Heart left ventricle (tissue), 16 donors: ENCODE measurements at regions of chr1 and their contacts with region 1.

Region 1: DNA sequence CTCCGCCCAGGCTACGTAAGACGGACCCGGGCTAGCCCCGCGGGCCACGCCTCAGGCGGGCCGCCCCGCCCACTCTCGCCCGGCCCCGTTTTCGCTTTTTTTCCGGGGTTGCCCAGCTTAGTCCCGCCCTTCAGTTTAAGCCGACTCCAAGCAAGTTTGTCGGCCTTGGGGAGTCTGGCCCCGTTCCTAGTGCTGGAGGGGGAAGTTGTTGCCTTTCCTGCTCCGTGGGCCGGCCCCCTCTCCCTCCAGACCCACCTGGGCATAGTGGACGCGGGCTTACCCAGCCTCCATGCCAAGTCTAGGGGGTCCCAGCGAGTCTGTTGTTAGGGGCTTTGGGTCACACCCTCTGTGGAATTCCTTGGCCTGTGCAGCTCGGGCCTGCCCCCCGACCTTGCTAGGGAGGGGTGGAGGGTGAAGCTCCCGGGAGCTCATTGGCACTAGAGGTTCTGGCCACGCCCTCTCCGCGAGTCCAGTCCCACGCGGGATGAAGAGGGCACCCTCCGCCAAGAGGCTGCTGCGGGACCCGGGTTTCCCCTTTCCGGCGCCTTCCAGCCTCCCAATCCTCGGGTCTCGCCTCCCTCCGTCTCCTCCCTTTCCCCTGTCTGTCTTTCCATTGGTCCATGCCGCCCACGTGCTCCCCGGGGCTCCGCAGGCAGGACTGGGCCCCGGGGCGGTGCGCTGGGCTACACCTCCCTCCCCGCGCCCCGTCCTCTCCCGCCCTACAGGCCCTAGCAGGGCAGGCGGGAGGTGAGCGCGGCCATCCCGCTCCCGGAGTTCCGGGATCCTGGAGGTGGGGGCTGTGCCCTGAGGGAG is 3.3 kb downstream of the RUSC1 start:
- DNase-seq: peak; percentile 97 to 98 (median 97)
- ATAC-seq: peak; percentile 85 to 91 (median 90)
- H3K4me3 ChIP-seq: peak overlapping the region; percentile 53 to 93 (median 80)
- H3K27ac ChIP-seq: peak overlapping the region; percentile 92 to 99 (median 95)
- H3K4me1 ChIP-seq: peaks cover 6 to 51% (median 31%) of the 10 kb centered on the region in 12 donors
- H3K27me3 ChIP-seq: no peaks in the 10 kb centered on the region
- CTCF ChIP-seq: no peak
- POLR2A ChIP-seq: peak in 1 of 2 donors; percentile 90

Region 2: DNA sequence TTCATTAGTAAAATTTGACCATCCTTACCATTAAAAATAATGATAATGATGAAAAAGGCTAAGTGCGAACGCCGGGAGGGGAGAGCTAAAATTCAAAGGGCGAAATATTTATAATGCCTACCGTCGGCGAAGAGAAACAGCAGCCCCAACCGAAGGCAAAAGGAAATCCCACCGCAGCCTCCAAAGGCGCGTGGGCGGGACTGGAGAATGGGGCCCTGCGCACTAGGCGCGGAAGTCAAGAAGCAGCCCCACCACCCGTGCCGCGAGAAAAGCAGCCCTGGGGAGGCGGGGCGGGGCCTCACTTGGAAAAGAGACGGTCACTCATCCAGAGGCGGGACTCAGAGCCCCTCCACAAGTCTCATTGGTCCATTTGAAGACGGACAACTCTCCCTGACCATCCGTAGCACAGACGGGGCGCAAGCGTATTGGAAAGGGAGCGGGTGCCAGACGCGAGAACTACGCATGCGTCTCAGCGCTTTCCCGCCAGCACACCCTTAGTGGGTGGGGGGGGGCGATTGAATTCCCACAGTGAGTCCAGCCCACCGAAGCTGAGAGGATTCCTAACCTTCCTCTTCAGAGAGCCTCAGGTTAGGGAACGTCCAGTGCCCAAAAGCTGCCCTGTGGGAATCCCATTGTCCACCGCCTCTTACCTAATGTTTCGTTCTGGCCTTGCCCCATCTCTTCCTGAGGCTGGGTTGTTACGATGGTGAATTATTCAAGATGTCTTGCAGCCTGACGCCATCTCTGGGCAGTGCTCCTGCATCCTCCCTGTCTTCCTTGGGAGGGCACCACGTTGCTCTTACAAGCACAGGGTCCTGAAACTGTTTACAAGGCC is 96.5 kb before region 1 on chr1:
- intact Hi-C with region 1: no loop called
- DNase-seq: peak; percentile 98 to 99 (median 99)
- ATAC-seq: peak; percentile 99
- H3K4me3 ChIP-seq: peak overlapping the region; percentile 22 to 77 (median 62)
- H3K27ac ChIP-seq: peak overlapping the region; percentile 42 to 96 (median 88)
- H3K4me1 ChIP-seq: peaks cover 0 to 54% (median 17%) of the 10 kb centered on the region in 12 donors
- H3K27me3 ChIP-seq: no peaks in the 10 kb centered on the region
- CTCF ChIP-seq: no peak
- POLR2A ChIP-seq: peak in 1 of 2 donors; percentile 81

Region 3: GRCh38 chr1:155244368-155245162 is 79.4 kb before region 1 on chr1:
- intact Hi-C with region 1: loop called in 1 of 10 experiments (anchors 1 kb)
- DNase-seq: peak; percentile 97 to 99 (median 98)
- ATAC-seq: peak; percentile 94 to 96 (median 94)
- H3K4me3 ChIP-seq: peak overlapping the region; percentile 46 to 77 (median 67)
- H3K27ac ChIP-seq: peak overlapping the region; percentile 75 to 97 (median 90)
- H3K4me1 ChIP-seq: peaks cover 0 to 41% (median 22%) of the 10 kb centered on the region in 12 donors
- H3K27me3 ChIP-seq: peaks cover 0 to 4% (median 0%) of the 10 kb centered on the region in 9 donors
- CTCF ChIP-seq: peak in 6 of 12 donors; percentile 24 to 56 (median 34)
- POLR2A ChIP-seq: peak in 1 of 2 donors; percentile 88

Region 4: DNA sequence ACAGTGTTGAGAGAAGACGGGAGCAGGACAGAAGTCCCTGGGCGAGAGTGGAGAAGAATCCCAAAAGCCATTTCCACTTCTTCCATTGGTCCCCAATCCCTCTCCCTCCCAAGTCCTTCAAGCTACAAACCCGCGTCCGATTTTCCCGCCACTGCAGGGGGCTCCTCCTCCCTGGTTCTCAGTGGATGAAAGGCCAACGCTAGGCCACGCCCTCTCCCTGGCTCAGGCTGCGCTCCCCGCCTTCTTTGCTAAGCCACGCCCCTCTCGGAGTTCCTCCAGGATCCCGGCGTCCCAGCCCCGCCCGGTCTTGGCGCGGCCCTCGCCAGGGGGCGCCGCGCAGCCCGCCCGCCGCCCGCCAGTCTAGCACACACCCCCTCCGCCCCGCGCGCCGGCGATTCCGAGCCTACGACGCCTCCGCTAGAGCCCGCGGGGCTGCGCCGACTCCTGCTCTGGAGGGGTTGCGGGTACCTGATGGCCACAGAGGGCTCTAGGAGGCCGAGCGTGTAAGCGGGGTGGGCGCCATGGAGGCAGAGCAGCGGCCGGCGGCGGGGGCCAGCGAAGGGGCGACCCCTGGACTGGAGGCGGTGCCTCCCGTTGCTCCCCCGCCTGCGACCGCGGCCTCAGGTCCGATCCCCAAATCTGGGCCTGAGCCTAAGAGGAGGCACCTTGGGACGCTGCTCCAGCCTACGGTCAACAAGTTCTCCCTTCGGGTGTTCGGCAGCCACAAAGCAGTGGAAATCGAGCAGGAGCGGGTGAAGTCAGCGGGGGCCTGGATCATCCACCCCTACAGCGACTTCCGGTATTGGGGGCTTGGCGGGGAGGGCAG is 46.7 kb before region 1 on chr1 and contains the start of gene HCN3:
- intact Hi-C with region 1: loop called (anchors 1 to 5 kb)
- DNase-seq: peak; percentile 98 to 99 (median 98)
- ATAC-seq: peak; percentile 89 to 94 (median 92)
- H3K4me3 ChIP-seq: peak within 1 kb of the TSS; percentile 33 to 82 (median 70)
- H3K27ac ChIP-seq: peak within 1 kb of the TSS; percentile 16 to 69 (median 52)
- H3K4me1 ChIP-seq: peaks cover 4 to 31% (median 21%) of the 10 kb centered on the region in 12 donors
- H3K27me3 ChIP-seq: no peaks in the 10 kb centered on the region
- CTCF ChIP-seq: peak; percentile 58 to 98 (median 86)
- POLR2A ChIP-seq: peak in 1 of 2 donors; percentile 25
- total RNA-seq, gene HCN3: 0.49 to 1.7 (median 0.99) TPM

Region 5: DNA sequence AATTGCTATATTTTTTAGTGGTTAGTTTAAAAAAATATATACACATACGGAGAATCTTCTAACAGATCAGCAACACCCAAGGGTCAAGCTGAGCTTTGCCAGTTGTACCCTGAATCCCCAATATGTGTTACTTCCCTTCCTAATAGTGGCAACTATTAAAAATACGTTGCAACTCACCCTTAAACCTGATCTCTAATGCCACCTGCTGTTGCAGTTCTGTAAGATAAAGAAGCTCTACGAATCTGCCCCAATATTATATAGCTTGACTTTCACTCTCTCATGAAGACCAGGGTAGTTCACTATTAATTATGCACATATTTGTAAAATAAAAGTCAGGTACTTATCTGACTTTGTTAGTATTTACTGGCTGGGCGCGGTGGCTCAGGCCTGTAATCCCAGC is 180.2 kb after region 1 on chr1:
- intact Hi-C with region 1: loop called in 1 of 10 experiments (anchors 2 kb)
- DNase-seq: no peak
- ATAC-seq: peak in 2 of 4 donors; percentile 42 to 45
- H3K4me3 ChIP-seq: no peak overlapping the region
- H3K27ac ChIP-seq: no peak overlapping the region
- H3K4me1 ChIP-seq: peaks cover 0 to 37% (median 24%) of the 10 kb centered on the region in 12 donors
- H3K27me3 ChIP-seq: no peaks in the 10 kb centered on the region
- CTCF ChIP-seq: peak in 10 of 12 donors; percentile 27 to 50 (median 34)
- POLR2A ChIP-seq: no peak

Region 6: GRCh38 chr1:155591770-155592169 is 267.8 kb after region 1 on chr1:
- intact Hi-C with region 1: loop called in 1 of 10 experiments (anchors 5 kb)
- DNase-seq: peak in 2 of 5 donors; percentile 28 to 32
- ATAC-seq: peak; percentile 43 to 74 (median 68)
- H3K4me3 ChIP-seq: no peak overlapping the region
- H3K27ac ChIP-seq: no peak overlapping the region
- H3K4me1 ChIP-seq: peaks cover 0 to 5% (median 0%) of the 10 kb centered on the region in 12 donors
- H3K27me3 ChIP-seq: no peaks in the 10 kb centered on the region
- CTCF ChIP-seq: peak; percentile 38 to 68 (median 56)
- POLR2A ChIP-seq: no peak